ENCODE measurements at regions of chr1 and their contacts with region 1.

Region 1: DNA sequence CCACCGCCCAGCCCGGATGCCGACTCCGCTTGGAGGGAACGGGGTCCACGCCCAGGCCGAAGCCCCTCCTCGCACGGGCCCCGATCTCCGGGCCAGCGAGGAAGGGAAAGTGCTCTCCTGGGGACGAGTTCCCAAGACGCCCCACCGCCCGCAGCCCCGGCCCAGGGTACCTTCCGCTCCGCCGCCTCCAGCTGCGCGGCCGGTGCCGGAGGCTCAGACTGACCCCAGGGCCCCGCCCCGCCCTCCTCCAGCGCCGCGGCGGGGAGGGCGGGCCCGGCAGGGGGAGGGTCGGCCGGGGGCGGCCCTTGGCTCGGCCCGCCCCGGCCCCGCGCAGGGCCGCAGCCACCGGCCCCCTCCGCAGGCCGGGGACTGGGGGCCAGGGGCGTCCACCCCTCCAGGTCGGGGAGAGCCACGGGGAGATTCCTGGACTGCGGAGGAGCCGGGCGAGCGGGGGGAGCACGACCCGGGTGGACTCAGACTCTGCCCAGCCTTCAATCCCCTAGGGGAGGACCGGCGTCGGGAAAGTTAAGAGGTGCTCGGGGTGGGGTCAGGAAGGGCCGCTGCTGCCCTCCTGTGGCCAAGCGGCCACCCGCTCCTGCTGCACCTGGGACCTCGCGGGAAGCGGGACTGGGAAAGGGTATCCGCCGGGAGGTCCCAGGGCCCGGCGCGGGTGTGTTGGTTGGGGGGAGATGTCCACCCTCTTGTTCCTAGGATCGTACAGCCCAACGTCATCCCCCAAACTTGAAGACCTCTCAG is at the start of gene RHOC:
- DNase-seq: peak; percentile 95
- H3K4me3 ChIP-seq: peak within 1 kb of the TSS; percentile 94 to 100 (median 97)
- H3K27ac ChIP-seq: peak within 1 kb of the TSS; percentile 98 to 99 (median 98)
- H3K4me1 ChIP-seq: peaks cover 0 to 47% (median 42%) of the 10 kb centered on the region in 4 donors
- H3K27me3 ChIP-seq: no peaks in the 10 kb centered on the region
- CTCF ChIP-seq: peak; percentile 85 to 96 (median 91)
- EP300 ChIP-seq: no peak
- POLR2A ChIP-seq: peak; percentile 69 to 70
- total RNA-seq, gene RHOC: 181 to 244 (median 192) TPM

Region 2: GRCh38 chr1:112390775-112391602 is 316.1 kb before region 1 on chr1:
- intact Hi-C with region 1: loop called (anchors 2 kb)
- DNase-seq: peak; percentile 96
- H3K4me3 ChIP-seq: peak overlapping the region; percentile 23 to 52 (median 46)
- H3K27ac ChIP-seq: peak overlapping the region; percentile 69 to 91 (median 84)
- H3K4me1 ChIP-seq: peaks cover 0 to 47% (median 36%) of the 10 kb centered on the region in 4 donors
- H3K27me3 ChIP-seq: no peaks in the 10 kb centered on the region
- CTCF ChIP-seq: peak; percentile 88 to 97 (median 92)
- EP300 ChIP-seq: no peak
- POLR2A ChIP-seq: no peak

Region 3: GRCh38 chr1:112466078-112466660 is 240.9 kb before region 1 on chr1:
- intact Hi-C with region 1: loop called (anchors 5 kb)
- DNase-seq: peak; percentile 98
- H3K4me3 ChIP-seq: peak overlapping the region; percentile 19 to 43 (median 38)
- H3K27ac ChIP-seq: peak overlapping the region; percentile 73 to 81 (median 77)
- H3K4me1 ChIP-seq: peaks cover 0 to 17% (median 13%) of the 10 kb centered on the region in 4 donors
- H3K27me3 ChIP-seq: no peaks in the 10 kb centered on the region
- CTCF ChIP-seq: peak; percentile 76 to 95 (median 88)
- EP300 ChIP-seq: peak in 1 of 4 donors; percentile 2
- POLR2A ChIP-seq: no peak

Region 4: GRCh38 chr1:112501810-112502641 is 205.1 kb before region 1 on chr1:
- intact Hi-C with region 1: loop called (anchors 5 kb)
- DNase-seq: peak; percentile 82
- H3K4me3 ChIP-seq: peak overlapping the region; percentile 37 to 54 (median 50)
- H3K27ac ChIP-seq: peak overlapping the region in 2 of 4 donors; percentile 25 to 50
- H3K4me1 ChIP-seq: peaks cover 0 to 14% (median 12%) of the 10 kb centered on the region in 4 donors
- H3K27me3 ChIP-seq: peaks cover 0 to 41% (median 0%) of the 10 kb centered on the region in 3 donors
- CTCF ChIP-seq: peak; percentile 33 to 64 (median 58)
- EP300 ChIP-seq: no peak
- POLR2A ChIP-seq: no peak

Region 5: DNA sequence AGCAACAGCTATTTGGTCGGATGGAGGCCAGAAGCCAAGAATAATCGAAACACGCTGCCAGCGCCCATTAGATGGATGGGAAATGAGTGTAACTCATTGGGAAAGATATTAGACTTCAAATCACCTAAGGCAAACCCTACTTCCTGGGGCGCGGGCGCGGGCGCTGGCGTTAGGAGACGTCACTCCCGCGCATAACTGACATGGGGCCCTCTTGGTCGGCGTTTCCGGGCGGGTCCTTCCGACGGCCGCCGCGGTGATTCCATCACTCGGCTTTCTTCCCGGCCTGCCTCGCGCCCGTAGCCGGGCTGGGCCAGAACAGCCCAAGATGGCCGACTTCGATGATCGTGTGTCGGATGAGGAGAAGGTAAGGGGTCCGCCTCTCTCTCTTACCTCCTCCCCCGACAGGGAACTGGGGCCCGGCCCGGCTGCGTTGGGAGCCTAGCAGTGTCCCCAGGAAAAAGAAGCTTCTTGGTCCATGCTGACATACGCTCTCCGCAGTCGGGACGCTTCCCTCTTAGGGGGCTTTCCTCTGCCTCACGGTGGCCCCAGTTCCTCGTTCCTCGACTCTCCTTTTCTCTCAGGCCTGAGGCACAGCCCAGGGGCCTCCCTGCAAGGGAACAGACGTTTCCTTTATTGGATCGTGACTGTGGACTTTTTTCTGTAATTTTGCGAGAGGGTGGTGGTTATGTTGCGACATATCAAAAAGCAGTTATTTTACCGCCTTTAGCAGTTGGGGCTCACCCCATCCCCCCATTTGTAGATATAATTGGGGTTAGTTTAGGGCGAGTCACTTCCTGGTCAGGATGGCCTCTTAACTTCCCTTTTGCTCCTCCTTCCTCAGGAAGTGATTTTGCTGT is 87.3 kb before region 1 on chr1 and contains the start of gene CAPZA1:
- intact Hi-C with region 1: loop called (anchors 1 kb)
- DNase-seq: peak; percentile 96
- H3K4me3 ChIP-seq: peak within 1 kb of the TSS; percentile 63 to 97 (median 90)
- H3K27ac ChIP-seq: peak within 1 kb of the TSS; percentile 94 to 99 (median 96)
- H3K4me1 ChIP-seq: peaks cover 0 to 42% (median 36%) of the 10 kb centered on the region in 4 donors
- H3K27me3 ChIP-seq: no peaks in the 10 kb centered on the region
- CTCF ChIP-seq: no peak
- EP300 ChIP-seq: peak in 3 of 4 donors; percentile 1 to 47 (median 8)
- POLR2A ChIP-seq: peak; percentile 86 to 88
- total RNA-seq, gene CAPZA1: 75.9 to 90.6 (median 81.3) TPM

Region 6: DNA sequence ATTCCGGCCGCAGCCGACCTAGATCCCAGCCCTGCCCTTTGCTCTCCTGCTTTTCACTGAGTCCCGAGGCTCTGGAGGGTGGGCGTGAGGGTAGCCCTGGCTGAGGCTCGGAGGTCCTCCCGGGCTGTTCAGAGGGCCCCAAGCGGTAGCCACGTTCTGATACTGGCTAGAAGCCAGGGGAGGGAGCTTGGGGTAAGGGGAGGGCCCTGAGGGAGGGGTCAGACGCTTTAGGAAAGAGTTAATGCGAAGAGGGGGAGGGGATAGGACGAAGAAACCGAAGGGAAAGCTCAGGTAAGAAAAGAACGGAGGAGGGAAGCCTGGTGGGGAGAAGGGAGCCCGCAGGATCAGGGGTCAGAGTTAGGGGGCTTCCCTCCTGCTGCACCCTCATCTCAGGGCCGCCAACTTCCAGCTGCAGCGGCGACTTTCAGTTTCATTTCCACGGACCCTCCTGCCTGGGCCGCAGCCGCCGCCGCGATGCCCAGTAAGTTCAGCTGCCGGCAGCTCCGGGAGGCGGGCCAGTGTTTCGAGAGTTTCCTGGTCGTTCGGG is 32.6 kb before region 1 on chr1 and contains the start of gene MOV10:
- intact Hi-C with region 1: loop called (anchors 1 kb)
- DNase-seq: peak; percentile 89
- H3K4me3 ChIP-seq: peak within 1 kb of the TSS; percentile 67 to 96 (median 85)
- H3K27ac ChIP-seq: peak within 1 kb of the TSS; percentile 87 to 96 (median 90)
- H3K4me1 ChIP-seq: peaks cover 0 to 24% (median 21%) of the 10 kb centered on the region in 4 donors
- H3K27me3 ChIP-seq: no peaks in the 10 kb centered on the region
- CTCF ChIP-seq: no peak
- EP300 ChIP-seq: no peak
- POLR2A ChIP-seq: no peak
- total RNA-seq, gene MOV10: 16.5 to 43.8 (median 22.3) TPM

Region 7: DNA sequence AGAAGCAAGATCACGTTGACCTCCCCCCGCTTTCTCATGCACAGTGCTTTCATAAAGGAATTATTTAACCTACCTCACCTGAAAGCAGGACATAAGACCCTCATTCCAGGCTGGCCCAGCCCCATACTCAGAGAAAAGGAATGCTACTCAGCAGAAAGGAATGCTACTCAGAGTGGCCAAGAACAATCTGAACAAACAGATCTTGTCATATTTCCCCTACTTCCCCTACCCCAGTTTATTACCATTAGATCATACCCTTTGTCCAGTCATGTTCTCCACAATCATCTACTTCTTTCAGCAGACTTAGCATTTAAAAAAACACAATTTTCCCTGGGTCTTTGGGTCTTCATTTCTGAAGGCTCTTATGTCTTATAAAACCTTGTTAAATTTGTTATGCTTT is 159.1 kb after region 1 on chr1:
- intact Hi-C with region 1: no loop called
- DNase-seq: no peak
- H3K4me3 ChIP-seq: no peak overlapping the region
- H3K27ac ChIP-seq: no peak overlapping the region
- H3K4me1 ChIP-seq: no peaks in the 10 kb centered on the region
- H3K27me3 ChIP-seq: no peaks in the 10 kb centered on the region
- CTCF ChIP-seq: no peak
- EP300 ChIP-seq: no peak
- POLR2A ChIP-seq: no peak